Activated CD4-positive, alpha-beta T cell treated with anti-CD3 and anti-CD28 coated beads for 36 hours (primary cell): ENCODE measurements at regions of chr1 and their contacts with region 1.

Region 1: DNA sequence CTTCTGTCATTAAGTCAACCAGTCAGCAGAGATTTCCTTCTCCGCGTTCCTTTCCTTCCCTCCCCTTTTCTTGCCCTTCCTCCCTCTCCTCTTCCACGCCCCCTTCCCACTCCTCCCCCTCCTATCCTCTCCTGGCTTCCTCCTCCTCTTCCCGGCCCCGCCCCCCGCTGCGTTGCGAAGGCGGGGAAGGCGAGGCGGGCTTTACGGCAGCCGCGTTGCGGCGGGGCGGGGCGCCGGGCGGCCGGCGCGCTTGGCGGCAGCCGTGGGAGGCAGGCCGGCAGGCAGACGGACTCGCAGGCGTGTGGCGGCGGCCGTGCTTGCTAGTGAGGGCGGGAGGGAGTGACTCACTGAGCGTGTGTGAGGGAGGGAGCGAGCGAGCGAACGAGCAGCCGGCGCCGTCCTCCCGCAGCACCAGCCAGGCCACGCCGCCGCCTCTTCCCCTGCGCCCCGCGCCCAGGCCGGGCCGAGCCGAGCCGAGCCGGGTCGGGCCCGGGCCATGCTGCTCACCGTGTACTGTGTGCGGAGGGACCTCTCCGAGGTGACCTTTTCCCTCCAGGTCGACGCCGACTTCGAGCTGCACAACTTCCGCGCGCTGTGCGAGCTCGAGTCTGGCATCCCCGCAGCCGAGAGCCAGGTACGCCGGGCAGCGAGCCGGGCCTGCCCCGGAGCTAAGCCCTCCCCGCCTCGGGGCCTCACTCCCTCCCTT is at the start of gene DDI2:
- DNase-seq: peak; percentile 98
- ATAC-seq: peak; percentile 89
- H3K4me3 Mint-ChIP-seq: peak within 1 kb of the TSS; percentile 94
- H3K27ac Mint-ChIP-seq: peak within 1 kb of the TSS; percentile 95
- H3K4me1 Mint-ChIP-seq: peaks cover 45% of the 10 kb centered on the region
- H3K27me3 Mint-ChIP-seq: no peaks in the 10 kb centered on the region
- total RNA-seq, gene DDI2: 30.2 to 34.0 TPM

Region 2: GRCh38 chr1:13699936-13700520 is 1917.3 kb before region 1 on chr1 and contains the start of gene PRDM2:
- CTCF ChIA-PET with region 1: no interaction called
- POLR2A ChIA-PET with region 1: no interaction called
- intact Hi-C with region 1: loop called in 1 of 2 experiments (anchors 5 kb)
- DNase-seq: peak; percentile 76
- ATAC-seq: peak; percentile 56
- H3K4me3 Mint-ChIP-seq: peak within 1 kb of the TSS; percentile 94
- H3K27ac Mint-ChIP-seq: peak within 1 kb of the TSS; percentile 98
- H3K4me1 Mint-ChIP-seq: peaks cover 41% of the 10 kb centered on the region
- H3K27me3 Mint-ChIP-seq: no peaks in the 10 kb centered on the region
- total RNA-seq, gene PRDM2: 36.2 to 46.7 TPM

Region 3: DNA sequence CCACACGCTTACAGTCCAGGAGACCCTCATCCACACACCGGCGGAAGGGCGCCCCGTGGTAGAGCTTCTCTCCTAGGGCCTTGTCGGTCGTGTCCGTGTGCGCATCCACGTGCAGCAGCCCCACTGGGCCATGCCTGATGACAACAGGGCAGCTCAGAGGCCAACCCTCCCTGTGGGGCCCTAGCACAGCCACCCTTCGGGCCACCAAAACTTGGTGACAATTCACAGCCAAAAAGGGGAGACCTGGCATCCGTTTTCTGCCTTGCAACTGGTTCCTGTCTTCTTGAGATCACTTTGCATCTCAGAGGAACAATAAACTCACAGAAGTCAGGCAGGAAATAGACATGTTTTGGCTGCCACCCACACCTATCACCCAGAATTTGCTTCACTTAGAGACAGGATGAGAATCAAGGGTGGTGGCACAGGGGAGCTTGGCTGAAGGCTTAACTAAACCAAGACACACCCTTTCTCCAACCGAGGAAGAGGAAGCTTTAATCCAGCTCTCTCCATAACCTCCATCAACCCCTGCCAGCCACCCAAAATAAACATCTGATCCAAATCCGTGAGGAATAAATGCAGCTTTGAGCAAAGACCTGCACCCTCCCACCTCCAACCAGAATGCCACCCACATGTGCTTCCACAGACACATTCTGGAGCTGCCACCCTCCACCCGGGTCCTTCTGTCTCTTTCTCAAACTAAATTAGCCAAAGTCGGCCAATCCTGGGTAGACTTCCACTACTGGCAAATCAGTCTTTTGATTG is 38.2 kb before region 1 on chr1:
- CTCF ChIA-PET with region 1: interaction called, 7 read pairs
- POLR2A ChIA-PET with region 1: interaction called, 3 read pairs
- intact Hi-C with region 1: loop called (anchors 1 to 5 kb)
- DNase-seq: peak; percentile 55
- ATAC-seq: peak; percentile 77
- H3K4me3 Mint-ChIP-seq: peak overlapping the region; percentile 32
- H3K27ac Mint-ChIP-seq: peak overlapping the region; percentile 90
- H3K4me1 Mint-ChIP-seq: peaks cover 45% of the 10 kb centered on the region
- H3K27me3 Mint-ChIP-seq: no peaks in the 10 kb centered on the region

Region 4: GRCh38 chr1:15678578-15678977 is 61.2 kb after region 1 on chr1:
- CTCF ChIA-PET with region 1: no interaction called
- POLR2A ChIA-PET with region 1: interaction called, 3 read pairs
- intact Hi-C with region 1: loop called in 1 of 2 experiments (anchors 1 kb)
- DNase-seq: peak; percentile 32
- ATAC-seq: peak; percentile 79
- H3K4me3 Mint-ChIP-seq: no peak overlapping the region
- H3K27ac Mint-ChIP-seq: no peak overlapping the region
- H3K4me1 Mint-ChIP-seq: peaks cover 25% of the 10 kb centered on the region
- H3K27me3 Mint-ChIP-seq: no peaks in the 10 kb centered on the region

Region 5: GRCh38 chr1:15847100-15847892 is 230.0 kb after region 1 on chr1 and contains the start of gene SPEN:
- CTCF ChIA-PET with region 1: no interaction called
- POLR2A ChIA-PET with region 1: no interaction called
- intact Hi-C with region 1: loop called (anchors 1 to 5 kb)
- DNase-seq: peak; percentile 99
- ATAC-seq: peak; percentile 88
- H3K4me3 Mint-ChIP-seq: peak within 1 kb of the TSS; percentile 91
- H3K27ac Mint-ChIP-seq: peak within 1 kb of the TSS; percentile 94
- H3K4me1 Mint-ChIP-seq: peaks cover 47% of the 10 kb centered on the region
- H3K27me3 Mint-ChIP-seq: no peaks in the 10 kb centered on the region
- total RNA-seq, gene SPEN: 43.2 to 52.7 TPM

Region 6: GRCh38 chr1:16206547-16207317 is 589.4 kb after region 1 on chr1:
- CTCF ChIA-PET with region 1: no interaction called
- POLR2A ChIA-PET with region 1: no interaction called
- intact Hi-C with region 1: loop called in 1 of 2 experiments (anchors 1 kb)
- DNase-seq: peak; percentile 97
- ATAC-seq: peak; percentile 94
- H3K4me3 Mint-ChIP-seq: peak overlapping the region; percentile 72
- H3K27ac Mint-ChIP-seq: peak overlapping the region; percentile 90
- H3K4me1 Mint-ChIP-seq: peaks cover 9% of the 10 kb centered on the region
- H3K27me3 Mint-ChIP-seq: no peaks in the 10 kb centered on the region

Region 7: DNA sequence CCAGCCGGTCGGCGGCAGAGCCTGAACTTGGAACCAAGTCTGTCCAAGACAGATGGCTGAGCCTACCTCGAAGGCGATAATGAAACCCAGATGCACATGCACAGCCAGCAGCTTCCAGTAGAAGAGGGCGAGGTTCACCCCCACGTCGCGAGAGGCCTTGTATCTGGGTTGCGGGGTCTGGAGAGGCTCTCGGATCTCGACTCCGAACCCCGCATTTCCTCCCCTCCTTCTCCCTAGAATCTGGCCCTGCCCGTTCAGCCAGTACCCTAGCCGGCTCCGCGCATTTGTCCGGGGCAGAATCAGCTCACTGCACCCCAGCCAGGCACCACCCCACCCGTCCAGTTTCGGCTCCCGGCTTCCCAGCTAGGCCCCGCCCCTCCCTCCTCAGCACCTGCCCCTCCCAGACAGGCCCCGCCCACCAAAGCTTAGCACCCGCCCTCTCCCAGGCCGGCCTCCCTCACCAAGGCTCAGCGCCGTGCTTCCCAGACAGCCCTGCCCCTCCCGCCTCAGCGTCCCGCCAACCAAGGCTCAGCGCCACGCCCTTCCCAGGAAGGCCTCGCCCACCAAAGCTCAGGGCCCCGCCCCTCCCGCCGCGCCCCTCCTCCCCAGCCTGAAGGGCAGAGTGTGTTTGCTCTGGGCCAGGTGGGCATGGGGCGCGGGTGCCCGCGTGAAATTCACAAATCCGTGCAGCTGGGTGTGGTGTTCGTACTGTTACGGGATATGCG is 599.9 kb after region 1 on chr1:
- CTCF ChIA-PET with region 1: no interaction called
- POLR2A ChIA-PET with region 1: no interaction called
- intact Hi-C with region 1: no loop called
- DNase-seq: peak; percentile 98
- ATAC-seq: peak; percentile 98
- H3K4me3 Mint-ChIP-seq: peak overlapping the region; percentile 73
- H3K27ac Mint-ChIP-seq: peak overlapping the region; percentile 20
- H3K4me1 Mint-ChIP-seq: peaks cover 20% of the 10 kb centered on the region
- H3K27me3 Mint-ChIP-seq: no peaks in the 10 kb centered on the region

Region 8: DNA sequence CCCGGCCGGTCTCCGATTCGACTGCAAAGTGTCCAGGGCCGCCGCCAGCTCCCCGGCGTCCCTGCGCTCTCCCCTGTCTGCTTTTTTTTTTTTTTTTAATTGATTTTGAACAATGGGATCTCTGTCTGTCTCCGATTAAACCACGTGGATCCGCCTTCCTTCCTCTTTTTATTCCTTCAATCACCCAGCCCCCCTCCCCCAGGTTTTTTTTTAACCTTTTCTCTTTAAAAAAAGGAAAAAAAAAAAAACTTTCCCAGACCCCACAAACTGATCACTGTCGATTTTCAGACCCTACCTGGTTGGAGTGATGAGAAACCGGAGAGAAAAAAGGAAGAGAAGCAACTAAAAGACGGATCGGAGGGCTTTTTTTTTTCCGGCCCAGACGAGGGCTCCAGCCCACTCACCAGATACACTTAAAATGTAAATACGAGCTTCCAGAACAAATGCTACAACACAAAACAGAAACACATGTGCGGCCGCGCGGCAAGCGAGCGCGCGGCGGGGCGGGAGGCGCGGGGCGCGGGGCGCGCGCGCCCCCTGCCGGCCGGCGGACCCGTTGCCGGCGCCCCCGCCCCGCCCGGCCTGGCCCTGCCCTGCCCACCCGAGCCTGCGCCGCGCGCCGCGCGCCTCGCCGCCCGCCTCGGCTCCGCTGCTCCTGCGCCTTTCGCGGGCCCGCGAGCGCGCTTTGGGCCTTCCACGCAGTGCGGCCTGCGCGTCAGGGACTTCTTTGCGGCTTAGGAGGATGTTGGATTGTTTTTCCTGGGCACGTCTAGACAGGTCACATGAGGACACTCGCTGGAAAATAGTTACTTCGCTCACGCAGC is 1822.1 kb after region 1 on chr1 and contains the start of gene RCC2:
- CTCF ChIA-PET with region 1: no interaction called
- POLR2A ChIA-PET with region 1: no interaction called
- intact Hi-C with region 1: loop called in 1 of 2 experiments (anchors 5 kb)
- DNase-seq: peak; percentile 86
- ATAC-seq: peak; percentile 69
- H3K4me3 Mint-ChIP-seq: peak within 1 kb of the TSS; percentile 96
- H3K27ac Mint-ChIP-seq: peak within 1 kb of the TSS; percentile 96
- H3K4me1 Mint-ChIP-seq: peaks cover 45% of the 10 kb centered on the region
- H3K27me3 Mint-ChIP-seq: no peaks in the 10 kb centered on the region
- total RNA-seq, gene RCC2: 107 to 120 TPM